MCF 10A (cell line): ENCODE measurements at regions of chr1 and their contacts with region 1.

Region 1: DNA sequence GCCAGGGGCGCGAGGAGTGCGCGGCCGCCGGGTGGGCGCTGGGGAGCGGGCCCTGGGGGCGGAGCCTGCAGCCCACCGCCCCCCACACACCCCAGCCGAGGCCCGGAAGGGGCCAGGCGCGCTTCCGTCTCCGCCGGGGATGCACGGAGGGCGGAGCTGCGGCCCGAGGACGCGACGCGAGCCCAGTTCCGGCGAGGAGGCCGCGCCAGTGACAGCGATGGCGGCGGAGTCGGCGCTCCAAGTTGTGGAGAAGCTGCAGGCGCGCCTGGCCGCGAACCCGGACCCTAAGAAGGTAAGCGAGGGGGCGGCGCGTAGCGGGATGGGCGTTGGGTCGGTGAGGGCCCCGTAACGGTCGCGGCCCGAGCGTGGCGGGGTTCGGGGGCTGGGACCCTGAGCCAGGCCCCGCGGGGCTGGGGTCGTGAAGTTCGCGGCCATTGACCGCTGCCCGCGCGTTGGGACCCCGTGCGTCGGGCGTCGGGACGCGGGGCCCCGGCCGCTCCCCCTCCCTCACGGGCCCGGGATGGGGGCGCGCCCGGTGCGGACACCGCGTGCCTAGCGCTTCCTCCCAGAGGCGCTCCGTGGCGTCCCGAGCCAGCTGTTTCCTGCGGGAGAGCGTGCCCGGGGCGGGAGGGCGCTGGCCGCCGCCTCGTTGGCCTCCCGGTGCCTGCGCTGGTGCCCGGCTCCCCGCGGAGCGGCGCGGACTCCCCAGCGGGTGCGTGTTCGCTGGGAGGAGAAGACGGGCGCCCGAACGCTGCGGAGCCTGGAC is at the start of gene ELOA:
- DNase-seq: peak; percentile 58
- H3K4me3 Mint-ChIP-seq: peak within 1 kb of the TSS; percentile 83
- H3K27ac Mint-ChIP-seq: peak within 1 kb of the TSS; percentile 86
- H3K4me1 Mint-ChIP-seq: peaks cover 35% of the 10 kb centered on the region
- H3K27me3 Mint-ChIP-seq: no peaks in the 10 kb centered on the region
- CTCF ChIP-seq: no peak
- total RNA-seq, gene ELOA: 68.3 and 69.1 TPM in 2 replicates

Region 2: GRCh38 chr1:23539698-23540266 is 203.7 kb before region 1 on chr1:
- CTCF ChIA-PET with region 1: interaction called, 4 read pairs
- POLR2A ChIA-PET with region 1: no interaction called
- intact Hi-C with region 1: loop called (anchors 5 kb)
- DNase-seq: peak; percentile 90
- H3K4me3 Mint-ChIP-seq: no peak overlapping the region
- H3K27ac Mint-ChIP-seq: no peak overlapping the region
- H3K4me1 Mint-ChIP-seq: peaks cover 18% of the 10 kb centered on the region
- H3K27me3 Mint-ChIP-seq: no peaks in the 10 kb centered on the region
- CTCF ChIP-seq: peak; percentile 91

Region 3: DNA sequence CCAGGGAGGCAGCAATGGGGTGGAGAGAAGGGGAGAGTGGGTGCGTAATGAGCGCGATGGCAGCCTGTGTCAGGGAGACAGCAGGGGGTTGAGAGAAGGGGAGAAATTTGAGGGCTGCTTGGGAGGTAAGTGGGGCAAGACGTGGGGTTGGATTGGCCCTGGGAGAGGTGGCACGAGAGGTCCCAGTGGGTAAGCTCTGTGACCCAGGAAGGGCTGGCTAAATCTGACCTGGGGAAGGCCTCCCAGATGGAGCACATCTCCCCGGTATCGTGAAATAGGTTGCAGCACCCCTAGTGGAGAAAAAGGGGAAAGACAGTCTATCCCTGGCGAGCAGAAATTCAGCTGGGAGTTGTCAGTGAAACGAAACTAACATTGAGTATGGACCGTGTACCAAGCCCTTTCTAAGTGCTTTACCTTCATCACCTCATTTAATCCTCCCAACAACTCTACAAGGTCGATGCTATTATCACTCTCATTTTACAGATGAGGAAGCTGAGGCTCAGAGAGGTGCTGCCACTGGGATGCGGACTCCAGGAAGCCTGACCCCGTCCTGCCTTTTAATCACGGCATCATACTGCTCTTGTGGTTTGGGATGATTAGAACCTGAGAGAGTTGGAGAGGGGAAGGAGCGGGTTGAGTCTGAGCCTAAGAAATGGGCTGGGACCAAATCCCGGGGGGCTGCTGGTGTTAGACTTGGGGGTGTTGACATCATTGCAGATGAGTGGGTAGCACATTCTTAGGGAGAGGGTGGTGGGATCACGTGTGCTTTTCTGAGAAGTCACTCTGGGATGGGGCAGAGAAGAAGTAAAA is 108.4 kb before region 1 on chr1:
- CTCF ChIA-PET with region 1: no interaction called
- POLR2A ChIA-PET with region 1: no interaction called
- intact Hi-C with region 1: no loop called
- DNase-seq: peak; percentile 75
- H3K4me3 Mint-ChIP-seq: peak overlapping the region; percentile 72
- H3K27ac Mint-ChIP-seq: peak overlapping the region; percentile 86
- H3K4me1 Mint-ChIP-seq: peaks cover 14% of the 10 kb centered on the region
- H3K27me3 Mint-ChIP-seq: no peaks in the 10 kb centered on the region
- CTCF ChIP-seq: peak; percentile 71

Region 4: DNA sequence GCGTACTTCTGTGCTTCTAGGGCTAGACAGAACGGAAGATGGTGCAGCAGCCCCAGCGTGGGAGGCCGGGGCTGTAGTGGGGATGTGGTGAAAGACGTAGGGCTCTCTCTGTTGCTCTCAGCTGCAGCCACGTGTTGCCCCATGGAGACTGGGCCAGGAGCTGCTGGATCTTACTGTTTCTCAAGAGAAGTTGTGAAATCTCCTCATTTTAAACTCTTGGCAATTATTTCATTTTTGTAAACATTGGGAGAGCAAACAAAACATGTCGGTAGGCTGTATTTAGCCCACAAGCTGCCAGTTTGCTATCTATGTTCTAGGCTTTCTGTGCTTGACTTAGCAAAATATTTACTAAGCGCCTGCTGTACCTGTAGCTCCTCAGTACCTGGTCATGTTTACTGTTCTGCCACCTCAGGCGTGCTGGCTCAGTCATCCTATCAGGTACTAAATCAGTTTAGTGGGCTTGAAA is 16.1 kb before region 1 on chr1:
- CTCF ChIA-PET with region 1: interaction called, 5 read pairs
- POLR2A ChIA-PET with region 1: interaction called, 13 read pairs
- intact Hi-C with region 1: no loop called
- DNase-seq: peak; percentile 83
- H3K4me3 Mint-ChIP-seq: no peak overlapping the region
- H3K27ac Mint-ChIP-seq: peak overlapping the region; percentile 19
- H3K4me1 Mint-ChIP-seq: peaks cover 27% of the 10 kb centered on the region
- H3K27me3 Mint-ChIP-seq: no peaks in the 10 kb centered on the region
- CTCF ChIP-seq: no peak

Region 5: DNA sequence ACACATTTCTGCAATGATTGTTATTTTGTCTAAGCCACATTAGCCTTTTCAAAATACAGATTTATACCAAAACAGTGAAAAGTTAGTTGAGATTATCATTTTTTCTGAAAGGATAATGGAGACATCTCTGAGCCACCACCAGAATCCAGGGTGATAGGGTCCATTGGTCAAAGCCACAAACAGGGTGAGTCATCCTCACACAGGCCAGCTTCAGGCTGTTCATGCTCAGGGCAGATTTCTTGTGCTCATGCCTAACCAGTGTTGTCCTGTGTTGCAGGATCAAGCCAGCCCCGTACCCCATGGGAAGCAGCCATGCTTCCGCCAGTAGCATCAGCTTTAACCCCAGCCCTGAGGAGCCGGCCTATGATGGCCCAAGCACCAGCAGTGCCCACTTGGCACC is 13.2 kb after region 1 on chr1:
- CTCF ChIA-PET with region 1: interaction called, 5 read pairs
- POLR2A ChIA-PET with region 1: interaction called, 19 read pairs
- intact Hi-C with region 1: no loop called
- DNase-seq: peak; percentile 45
- H3K4me3 Mint-ChIP-seq: no peak overlapping the region
- H3K27ac Mint-ChIP-seq: no peak overlapping the region
- H3K4me1 Mint-ChIP-seq: no peaks in the 10 kb centered on the region
- H3K27me3 Mint-ChIP-seq: no peaks in the 10 kb centered on the region
- CTCF ChIP-seq: no peak

Region 6: GRCh38 chr1:23790696-23791515 is 47.4 kb after region 1 on chr1 and contains the start of gene LYPLA2:
- CTCF ChIA-PET with region 1: no interaction called
- POLR2A ChIA-PET with region 1: interaction called, 10 read pairs
- intact Hi-C with region 1: no loop called
- DNase-seq: peak; percentile 91
- H3K4me3 Mint-ChIP-seq: peak within 1 kb of the TSS; percentile 100
- H3K27ac Mint-ChIP-seq: peak within 1 kb of the TSS; percentile 94
- H3K4me1 Mint-ChIP-seq: peaks cover 23% of the 10 kb centered on the region
- H3K27me3 Mint-ChIP-seq: no peaks in the 10 kb centered on the region
- CTCF ChIP-seq: no peak
- total RNA-seq, gene LYPLA2: 27.8 and 35.7 TPM in 2 replicates

Region 7: GRCh38 chr1:23825076-23825761 is 81.7 kb after region 1 on chr1 and contains the start of gene HMGCL:
- CTCF ChIA-PET with region 1: no interaction called
- POLR2A ChIA-PET with region 1: no interaction called
- intact Hi-C with region 1: no loop called
- DNase-seq: peak; percentile 86
- H3K4me3 Mint-ChIP-seq: peak within 1 kb of the TSS; percentile 90
- H3K27ac Mint-ChIP-seq: peak within 1 kb of the TSS; percentile 92
- H3K4me1 Mint-ChIP-seq: peaks cover 11% of the 10 kb centered on the region
- H3K27me3 Mint-ChIP-seq: no peaks in the 10 kb centered on the region
- CTCF ChIP-seq: no peak
- total RNA-seq, gene HMGCL: 30.4 and 39.3 TPM in 2 replicates